ENCODE measurements at regions of chr14 and their contacts with region 1.

Region 1: GRCh38 chr14:53295985-53296582 is 143.0 kb upstream of the DDHD1 start:
- DNase-seq: peak; percentile 49
- H3K4me3 ChIP-seq: no peak overlapping the region
- H3K27ac ChIP-seq: no peak overlapping the region
- H3K4me1 ChIP-seq: no peaks in the 10 kb centered on the region
- H3K27me3 ChIP-seq: peaks cover 3% of the 10 kb centered on the region
- CTCF ChIP-seq: peak; percentile 74

Region 2: GRCh38 chr14:52369305-52369801 is 926.7 kb before region 1 on chr14:
- CTCF ChIA-PET with region 1: no interaction called
- POLR2A ChIA-PET with region 1: no interaction called
- intact Hi-C with region 1: no loop called
- DNase-seq: no peak
- H3K4me3 ChIP-seq: no peak overlapping the region
- H3K27ac ChIP-seq: no peak overlapping the region
- H3K4me1 ChIP-seq: no peaks in the 10 kb centered on the region
- H3K27me3 ChIP-seq: no peaks in the 10 kb centered on the region
- CTCF ChIP-seq: no peak

Region 3: DNA sequence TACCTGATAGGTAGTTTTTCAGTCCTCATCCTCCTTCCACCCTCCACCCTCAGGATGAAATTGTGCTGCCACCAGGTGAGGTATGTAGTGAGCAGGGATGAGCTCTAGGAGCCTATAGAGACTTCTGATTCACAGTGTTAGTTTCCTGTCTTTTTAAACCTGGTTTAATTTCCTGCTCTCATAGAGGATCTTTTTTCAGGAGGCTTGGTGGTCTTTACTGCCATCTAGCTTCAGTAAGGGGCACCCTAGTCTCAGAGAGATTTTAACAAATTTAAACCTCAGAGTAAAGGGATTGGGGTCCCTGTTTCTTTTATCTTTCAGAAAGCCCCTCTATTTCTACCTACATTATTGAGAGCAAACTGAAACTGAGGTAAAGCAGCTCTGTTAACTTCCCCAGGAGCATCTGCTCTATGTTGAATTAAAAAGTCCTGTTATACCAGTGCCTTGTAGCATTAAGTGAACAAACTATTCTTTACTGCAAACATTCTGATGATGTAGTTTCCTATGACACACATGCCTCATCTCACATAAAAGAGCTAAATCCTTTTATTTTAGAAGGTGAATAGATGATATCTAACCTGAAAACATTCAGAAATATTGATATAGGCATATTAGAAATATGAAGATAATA is 29.2 kb after region 1 on chr14:
- CTCF ChIA-PET with region 1: interaction called, 11 read pairs
- POLR2A ChIA-PET with region 1: no interaction called
- intact Hi-C with region 1: no loop called
- DNase-seq: peak; percentile 40
- H3K4me3 ChIP-seq: no peak overlapping the region
- H3K27ac ChIP-seq: no peak overlapping the region
- H3K4me1 ChIP-seq: no peaks in the 10 kb centered on the region
- H3K27me3 ChIP-seq: peaks cover 28% of the 10 kb centered on the region
- CTCF ChIP-seq: peak; percentile 52

Measured in A673 (cell line).